CD8-positive, alpha-beta T cell (primary cell): ENCODE measurements at regions of chr1 and their contacts with region 1.

Region 1: GRCh38 chr1:185566995-185567394 is 167.2 kb upstream of the HMCN1 start:
- DNase-seq: peak in 7 of 9 experiments; percentile 27 to 95 (median 60)
- ATAC-seq: peak; percentile 78
- H3K4me3 ChIP-seq: peak overlapping the region in 1 of 2 experiments; percentile 9
- H3K4me3 Mint-ChIP-seq: peak overlapping the region; percentile 74
- H3K27ac ChIP-seq: peak overlapping the region; percentile 79 to 93
- H3K27ac Mint-ChIP-seq: peak overlapping the region; percentile 97
- H3K4me1 ChIP-seq: peaks cover 46% of the 10 kb centered on the region
- H3K4me1 Mint-ChIP-seq: peaks cover 82% of the 10 kb centered on the region
- H3K27me3 ChIP-seq: no peaks in the 10 kb centered on the region
- H3K27me3 Mint-ChIP-seq: no peaks in the 10 kb centered on the region
- CTCF ChIP-seq: no peak

Region 2: DNA sequence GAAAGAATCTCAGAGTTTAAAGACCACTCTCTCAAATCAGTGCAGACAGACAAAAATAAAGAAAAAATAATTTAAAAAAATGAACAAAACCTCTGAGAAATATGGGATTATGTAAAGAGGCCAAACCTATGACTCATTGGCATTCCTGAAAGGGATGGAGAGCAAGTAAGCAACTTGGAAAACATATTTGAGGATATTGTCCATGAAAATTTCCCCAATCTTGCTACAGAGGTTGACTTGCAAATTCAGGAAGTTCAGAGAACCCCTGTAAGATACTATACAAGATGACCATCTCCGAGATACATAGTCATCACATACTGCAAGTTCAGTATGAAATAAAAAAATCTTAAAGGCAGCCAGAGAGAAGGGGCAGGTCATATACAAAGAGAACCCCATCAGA is 206.3 kb before region 1 on chr1:
- CTCF ChIA-PET with region 1: no interaction called
- POLR2A ChIA-PET with region 1: no interaction called
- intact Hi-C with region 1: no loop called
- DNase-seq: no peak
- ATAC-seq: no peak
- H3K4me3 ChIP-seq: no peak overlapping the region
- H3K4me3 Mint-ChIP-seq: no peak overlapping the region
- H3K27ac ChIP-seq: no peak overlapping the region
- H3K27ac Mint-ChIP-seq: no peak overlapping the region
- H3K4me1 ChIP-seq: no peaks in the 10 kb centered on the region
- H3K4me1 Mint-ChIP-seq: no peaks in the 10 kb centered on the region
- H3K27me3 ChIP-seq: no peaks in the 10 kb centered on the region
- H3K27me3 Mint-ChIP-seq: no peaks in the 10 kb centered on the region
- CTCF ChIP-seq: no peak

Region 3: DNA sequence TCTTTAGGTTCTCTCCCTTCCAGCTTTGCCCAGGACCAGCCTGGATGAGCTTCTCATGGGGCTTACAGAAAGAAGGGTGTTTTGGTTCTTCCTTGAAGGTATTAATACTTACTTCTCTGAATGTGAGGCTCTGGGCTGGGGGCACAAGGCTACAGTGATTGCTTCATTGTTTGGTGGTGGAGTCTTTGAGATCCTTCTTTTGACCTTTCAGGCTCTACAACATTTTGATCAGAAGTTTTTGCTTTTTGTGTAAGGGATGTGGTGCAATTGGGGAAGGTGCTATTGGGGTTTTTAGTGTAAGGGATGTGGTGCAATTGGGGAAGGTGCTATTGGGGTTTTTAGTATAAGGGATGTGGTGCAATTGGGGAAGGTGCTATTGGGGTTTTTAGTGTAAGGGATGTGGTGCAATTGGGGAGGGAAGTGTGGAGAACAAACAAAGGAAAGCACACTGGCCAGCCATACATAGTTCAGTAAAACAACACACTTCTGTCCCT is 146.4 kb before region 1 on chr1:
- CTCF ChIA-PET with region 1: no interaction called
- POLR2A ChIA-PET with region 1: no interaction called
- intact Hi-C with region 1: loop called in 1 of 2 experiments (anchors 5 kb)
- DNase-seq: peak in 4 of 9 experiments; percentile 18 to 84 (median 45)
- ATAC-seq: peak; percentile 89
- H3K4me3 ChIP-seq: peak overlapping the region in 1 of 2 experiments; percentile 7
- H3K4me3 Mint-ChIP-seq: peak overlapping the region; percentile 15
- H3K27ac ChIP-seq: peak overlapping the region in 1 of 2 experiments; percentile 55
- H3K27ac Mint-ChIP-seq: no peak overlapping the region
- H3K4me1 ChIP-seq: peaks cover 20% of the 10 kb centered on the region
- H3K4me1 Mint-ChIP-seq: peaks cover 21% of the 10 kb centered on the region
- H3K27me3 ChIP-seq: no peaks in the 10 kb centered on the region
- H3K27me3 Mint-ChIP-seq: no peaks in the 10 kb centered on the region
- CTCF ChIP-seq: no peak

Region 4: DNA sequence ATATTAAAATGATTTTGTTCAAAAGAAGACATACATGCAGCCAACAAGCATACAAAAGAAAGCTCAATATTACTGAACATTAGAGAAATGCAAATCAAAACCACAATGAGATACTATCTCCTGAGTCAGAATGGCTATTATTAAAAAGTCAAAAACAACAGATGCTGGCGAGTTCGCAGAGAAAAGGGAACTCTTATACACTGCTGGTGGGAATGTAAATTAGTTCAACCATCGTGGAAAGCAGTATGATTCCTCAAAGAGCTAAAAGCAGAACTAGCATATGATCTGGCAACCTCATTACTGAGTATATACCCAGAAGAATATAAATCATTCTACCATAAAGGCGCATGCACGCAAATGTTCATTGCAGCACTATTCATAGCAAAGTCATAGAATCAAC is 41.2 kb after region 1 on chr1:
- CTCF ChIA-PET with region 1: no interaction called
- POLR2A ChIA-PET with region 1: no interaction called
- intact Hi-C with region 1: no loop called
- DNase-seq: no peak
- ATAC-seq: no peak
- H3K4me3 ChIP-seq: no peak overlapping the region
- H3K4me3 Mint-ChIP-seq: no peak overlapping the region
- H3K27ac ChIP-seq: no peak overlapping the region
- H3K27ac Mint-ChIP-seq: no peak overlapping the region
- H3K4me1 ChIP-seq: no peaks in the 10 kb centered on the region
- H3K4me1 Mint-ChIP-seq: no peaks in the 10 kb centered on the region
- H3K27me3 ChIP-seq: no peaks in the 10 kb centered on the region
- H3K27me3 Mint-ChIP-seq: peaks cover 2% of the 10 kb centered on the region
- CTCF ChIP-seq: no peak

Region 5: GRCh38 chr1:185670187-185670627 is 103.2 kb after region 1 on chr1:
- CTCF ChIA-PET with region 1: interaction called, 7 read pairs
- POLR2A ChIA-PET with region 1: interaction called, 5 read pairs
- intact Hi-C with region 1: loop called (anchors 2 to 5 kb)
- DNase-seq: peak; percentile 12 to 78 (median 63)
- ATAC-seq: peak; percentile 81
- H3K4me3 ChIP-seq: no peak overlapping the region
- H3K4me3 Mint-ChIP-seq: no peak overlapping the region
- H3K27ac ChIP-seq: no peak overlapping the region
- H3K27ac Mint-ChIP-seq: peak overlapping the region; percentile 78
- H3K4me1 ChIP-seq: peaks cover 14% of the 10 kb centered on the region
- H3K4me1 Mint-ChIP-seq: peaks cover 39% of the 10 kb centered on the region
- H3K27me3 ChIP-seq: no peaks in the 10 kb centered on the region
- H3K27me3 Mint-ChIP-seq: no peaks in the 10 kb centered on the region
- CTCF ChIP-seq: peak; percentile 69

Region 6: GRCh38 chr1:185790194-185790735 is 223.3 kb after region 1 on chr1:
- CTCF ChIA-PET with region 1: no interaction called
- POLR2A ChIA-PET with region 1: no interaction called
- intact Hi-C with region 1: no loop called
- DNase-seq: no peak
- ATAC-seq: no peak
- H3K4me3 ChIP-seq: no peak overlapping the region
- H3K4me3 Mint-ChIP-seq: no peak overlapping the region
- H3K27ac ChIP-seq: no peak overlapping the region
- H3K27ac Mint-ChIP-seq: no peak overlapping the region
- H3K4me1 ChIP-seq: no peaks in the 10 kb centered on the region
- H3K4me1 Mint-ChIP-seq: no peaks in the 10 kb centered on the region
- H3K27me3 ChIP-seq: peaks cover 0 to 3% of the 10 kb centered on the region in 2 experiments
- H3K27me3 Mint-ChIP-seq: peaks cover 1% of the 10 kb centered on the region
- CTCF ChIP-seq: no peak